ENCODE measurements at regions of chr12 and their contacts with region 1.

Region 1: GRCh38 chr12:122471324-122472226 is 29.2 kb downstream of the ZCCHC8 start:
- DNase-seq: no peak
- ATAC-seq: peak; percentile 52 to 53
- H3K4me3 ChIP-seq: no peak overlapping the region
- H3K27ac ChIP-seq: peak overlapping the region; percentile 53 to 73 (median 64)
- H3K4me1 ChIP-seq: peaks cover 5 to 7% of the 10 kb centered on the region in 2 donors
- H3K27me3 ChIP-seq: no peaks in the 10 kb centered on the region
- CTCF ChIP-seq: peak; percentile 72 to 93 (median 76)
- POLR2A ChIP-seq: no peak

Region 2: DNA sequence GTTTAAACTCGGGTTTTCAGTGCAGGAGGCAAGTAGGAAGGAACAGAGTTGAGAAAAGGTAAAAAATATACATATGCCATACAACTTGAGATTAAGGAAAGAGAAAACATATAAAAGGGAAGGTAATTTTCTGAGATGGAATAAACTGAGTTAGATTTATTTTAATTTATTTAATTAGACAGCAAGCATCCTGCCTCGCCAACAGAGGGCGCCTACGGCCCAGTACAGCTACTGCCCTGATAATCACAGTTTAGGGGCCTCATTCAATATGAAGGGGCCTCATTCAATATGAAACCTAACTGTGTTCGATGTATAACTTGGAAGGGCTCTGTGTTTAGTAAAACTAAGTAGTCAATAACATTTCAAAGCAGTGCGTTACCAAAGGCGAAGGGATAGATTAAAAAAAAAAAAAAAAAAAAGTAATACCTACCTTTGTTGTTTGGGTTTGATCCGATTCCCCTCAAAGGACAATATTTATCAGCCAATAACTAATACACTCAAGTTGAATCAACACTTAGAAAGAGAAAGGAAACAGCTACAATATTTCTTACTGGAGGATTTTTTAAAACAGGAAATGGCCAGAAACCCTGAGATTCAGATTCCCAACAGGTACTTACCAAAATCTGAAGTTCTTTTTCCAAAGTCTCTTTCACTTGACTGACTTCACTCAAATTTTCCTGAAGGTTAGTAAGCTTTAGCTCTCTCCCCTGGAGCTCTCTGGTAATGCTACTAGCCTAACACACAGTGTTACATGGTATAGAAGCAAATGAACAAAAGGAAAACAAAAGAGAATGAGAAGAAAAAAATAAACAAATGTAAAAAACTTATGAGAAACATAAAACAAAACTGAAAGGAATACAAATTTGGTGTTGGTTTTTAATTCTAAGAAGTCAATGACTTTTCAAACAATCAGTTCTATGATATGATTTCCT is 135.3 kb before region 1 on chr12:
- in situ Hi-C with region 1: loop called in 2 of 4 experiments (anchors 5 to 10 kb)
- intact Hi-C with region 1: loop called (anchors 5 kb)
- DNase-seq: no peak
- ATAC-seq: peak in 1 of 2 donors; percentile 22
- H3K4me3 ChIP-seq: no peak overlapping the region
- H3K27ac ChIP-seq: peak overlapping the region; percentile 12 to 65 (median 57)
- H3K4me1 ChIP-seq: no peaks in the 10 kb centered on the region
- H3K27me3 ChIP-seq: no peaks in the 10 kb centered on the region
- CTCF ChIP-seq: peak; percentile 44 to 66 (median 56)
- POLR2A ChIP-seq: no peak

Region 3: GRCh38 chr12:122350141-122350848 is 121.3 kb before region 1 on chr12:
- in situ Hi-C with region 1: no loop called
- intact Hi-C with region 1: loop called (anchors 5 kb)
- DNase-seq: no peak
- ATAC-seq: no peak
- H3K4me3 ChIP-seq: no peak overlapping the region
- H3K27ac ChIP-seq: peak overlapping the region; percentile 29 to 62 (median 44)
- H3K4me1 ChIP-seq: peaks cover 3 to 11% of the 10 kb centered on the region in 2 donors
- H3K27me3 ChIP-seq: no peaks in the 10 kb centered on the region
- CTCF ChIP-seq: peak in 1 of 5 experiments; percentile 7
- POLR2A ChIP-seq: no peak